BJ (cell line): ENCODE measurements at regions of chr9 and their contacts with region 1.

Region 1: DNA sequence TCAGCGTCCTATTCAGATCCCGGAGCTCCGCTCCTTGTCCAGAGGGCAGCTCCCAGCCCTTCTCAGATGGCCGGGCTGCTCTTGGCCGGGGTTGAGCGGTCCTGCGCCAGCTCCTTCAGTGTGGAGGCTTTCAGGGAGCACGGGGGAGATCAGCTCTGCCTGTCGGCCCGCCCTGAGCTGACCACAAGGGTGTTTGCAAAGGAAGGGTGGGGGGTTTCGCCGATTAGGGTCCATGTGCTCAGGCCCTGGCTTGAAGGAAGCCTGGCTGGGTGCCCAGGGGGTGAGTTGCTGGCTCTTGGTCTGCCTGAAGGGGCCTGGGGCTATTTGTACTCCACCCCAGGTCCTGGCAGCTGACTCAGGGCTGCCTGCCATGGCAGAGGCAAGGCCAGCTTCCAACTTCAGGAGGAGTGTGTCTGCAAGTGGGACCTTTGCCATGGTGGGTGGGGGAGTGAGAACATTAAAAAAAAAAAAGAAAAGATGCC is 250.1 kb upstream of the KLF4 start:
- DNase-seq: no peak
- H3K4me3 ChIP-seq: no peak overlapping the region
- H3K27me3 ChIP-seq: no peaks in the 10 kb centered on the region
- CTCF ChIP-seq: no peak

Region 2: GRCh38 chr9:107648153-107648715 is 91.4 kb before region 1 on chr9:
- CTCF ChIA-PET with region 1: no interaction called
- POLR2A ChIA-PET with region 1: interaction called, 12 read pairs
- DNase-seq: no peak
- H3K4me3 ChIP-seq: no peak overlapping the region
- H3K27me3 ChIP-seq: no peaks in the 10 kb centered on the region
- CTCF ChIP-seq: no peak